Activated CD4-positive, alpha-beta memory T cell treated with anti-CD3 and anti-CD28 coated beads for 36 hours (primary cell): ENCODE measurements at regions of chr16 and their contacts with region 1.

Region 1: GRCh38 chr16:74695450-74696422 is 4.9 kb downstream of the MLKL start:
- DNase-seq: peak; percentile 75
- H3K4me3 Mint-ChIP-seq: peak overlapping the region; percentile 69
- H3K27ac Mint-ChIP-seq: no peak overlapping the region
- H3K4me1 Mint-ChIP-seq: peaks cover 40% of the 10 kb centered on the region
- H3K27me3 Mint-ChIP-seq: no peaks in the 10 kb centered on the region

Region 2: DNA sequence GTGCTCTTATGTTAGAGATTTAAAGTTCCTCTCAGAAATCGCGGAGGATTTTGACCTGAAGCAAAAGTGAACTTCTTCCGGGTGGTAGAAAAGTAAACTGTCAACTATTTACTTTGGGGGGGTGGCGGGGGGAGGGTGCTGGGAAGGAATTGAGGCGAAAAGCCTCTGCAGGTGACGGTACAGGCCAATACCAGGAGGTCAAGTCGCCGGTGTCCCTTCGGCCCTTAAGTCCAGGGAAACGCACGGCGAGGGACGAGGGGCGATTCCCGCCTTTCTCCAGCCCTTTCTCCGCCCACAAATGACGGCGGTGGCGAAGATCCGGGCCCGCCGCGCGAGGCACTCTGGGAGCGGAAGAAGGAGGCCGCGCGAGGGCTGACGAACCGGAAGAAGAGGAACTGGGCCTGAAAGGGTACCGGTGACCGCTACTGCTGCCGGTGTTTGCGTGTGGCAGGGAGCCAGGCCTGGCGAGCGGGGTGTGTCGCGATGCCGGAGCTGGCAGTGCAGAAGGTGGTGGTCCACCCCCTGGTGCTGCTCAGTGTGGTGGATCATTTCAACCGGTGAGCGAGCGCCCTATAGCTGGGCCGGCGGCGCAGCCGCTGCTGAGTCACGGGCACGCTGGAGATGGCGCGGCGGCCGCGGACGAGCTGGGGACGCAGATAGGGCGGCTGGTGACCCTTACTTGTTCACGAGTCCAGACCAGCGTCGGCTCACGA is 399.1 kb before region 1 on chr16 and contains the start of gene PSMD7:
- CTCF ChIA-PET with region 1: no interaction called
- POLR2A ChIA-PET with region 1: no interaction called
- intact Hi-C with region 1: loop called (anchors 1 kb)
- DNase-seq: peak; percentile 94
- H3K4me3 Mint-ChIP-seq: peak within 1 kb of the TSS; percentile 87
- H3K27ac Mint-ChIP-seq: peak within 1 kb of the TSS; percentile 94
- H3K4me1 Mint-ChIP-seq: peaks cover 31% of the 10 kb centered on the region
- H3K27me3 Mint-ChIP-seq: no peaks in the 10 kb centered on the region
- total RNA-seq, gene PSMD7: 119 to 123 TPM

Region 3: DNA sequence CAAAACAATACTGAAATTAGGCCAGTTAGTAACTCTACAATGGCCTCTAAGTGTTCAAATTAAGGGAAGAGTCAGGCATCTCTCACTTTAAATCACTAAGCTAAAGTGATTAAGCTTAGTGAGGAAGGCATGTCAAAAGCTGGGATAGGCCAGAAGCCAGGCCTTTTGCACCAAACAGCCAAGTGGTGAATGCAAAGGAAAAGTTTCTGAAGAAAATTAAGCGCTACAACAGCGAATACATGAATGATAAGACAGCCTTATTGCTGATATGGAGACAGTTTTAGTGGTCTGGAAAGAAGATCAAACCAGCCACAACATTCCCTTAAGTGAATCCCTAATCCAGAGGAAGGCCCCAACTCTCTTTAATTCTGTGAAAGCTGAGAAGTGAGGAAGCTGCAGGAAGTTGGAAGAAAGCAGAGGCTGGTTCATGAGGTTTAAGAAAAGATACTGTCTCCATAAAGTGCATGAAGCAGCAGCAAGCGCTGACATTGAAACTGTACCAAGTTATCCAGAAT is 41.1 kb before region 1 on chr16:
- CTCF ChIA-PET with region 1: no interaction called
- POLR2A ChIA-PET with region 1: no interaction called
- intact Hi-C with region 1: no loop called
- DNase-seq: no peak
- H3K4me3 Mint-ChIP-seq: no peak overlapping the region
- H3K27ac Mint-ChIP-seq: no peak overlapping the region
- H3K4me1 Mint-ChIP-seq: peaks cover 57% of the 10 kb centered on the region
- H3K27me3 Mint-ChIP-seq: no peaks in the 10 kb centered on the region

Region 4: DNA sequence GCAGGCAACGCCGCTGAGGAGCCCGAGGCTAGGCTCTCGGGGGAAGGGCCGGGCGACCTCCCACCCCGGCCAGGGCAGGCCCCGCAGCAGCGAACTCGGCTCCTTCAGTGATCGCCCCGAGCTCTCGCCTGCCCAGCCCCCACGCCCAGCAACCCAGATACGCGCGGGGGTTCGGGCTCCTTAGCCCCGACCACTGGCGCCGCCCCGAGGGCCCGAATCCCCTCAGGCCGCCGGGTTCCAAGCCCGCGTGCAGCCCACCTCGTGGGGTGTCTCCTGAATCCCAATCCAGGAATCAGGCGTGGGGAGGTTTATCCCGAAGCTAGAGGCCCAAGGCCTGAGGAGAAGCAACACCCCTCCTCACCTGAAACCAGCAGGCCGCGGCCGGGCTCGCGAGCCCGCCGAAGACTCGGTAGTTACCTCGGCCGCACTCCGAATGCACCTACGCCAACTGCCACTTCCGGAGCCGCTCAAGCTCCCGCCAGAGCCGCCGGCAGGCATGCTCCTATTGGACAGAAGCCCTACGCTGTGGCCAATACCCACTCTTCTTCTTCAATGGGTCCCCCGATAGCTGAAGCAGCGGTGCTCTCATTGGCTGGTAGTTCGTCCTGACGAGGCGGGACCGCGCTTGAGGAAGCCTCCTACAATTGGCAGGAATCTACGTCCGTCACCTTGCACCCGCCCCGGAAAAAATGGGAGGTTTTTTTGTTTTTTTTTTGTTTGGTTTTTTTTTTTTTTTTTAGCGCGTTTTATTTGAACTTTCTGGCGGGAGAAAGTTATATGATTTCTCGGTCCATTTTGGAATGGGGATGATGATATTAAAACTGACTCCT is 29.1 kb before region 1 on chr16 and contains the start of gene RFWD3:
- CTCF ChIA-PET with region 1: interaction called, 14 read pairs
- POLR2A ChIA-PET with region 1: interaction called, 43 read pairs
- intact Hi-C with region 1: loop called (anchors 1 kb)
- DNase-seq: peak; percentile 98
- H3K4me3 Mint-ChIP-seq: peak within 1 kb of the TSS; percentile 85
- H3K27ac Mint-ChIP-seq: peak within 1 kb of the TSS; percentile 91
- H3K4me1 Mint-ChIP-seq: peaks cover 39% of the 10 kb centered on the region
- H3K27me3 Mint-ChIP-seq: no peaks in the 10 kb centered on the region
- total RNA-seq, gene RFWD3: 95.3 to 109 TPM

Region 5: GRCh38 chr16:74726716-74727115 is 31.0 kb after region 1 on chr16:
- CTCF ChIA-PET with region 1: interaction called, 16 read pairs
- POLR2A ChIA-PET with region 1: no interaction called
- intact Hi-C with region 1: no loop called
- DNase-seq: peak; percentile 65
- H3K4me3 Mint-ChIP-seq: no peak overlapping the region
- H3K27ac Mint-ChIP-seq: no peak overlapping the region
- H3K4me1 Mint-ChIP-seq: peaks cover 6% of the 10 kb centered on the region
- H3K27me3 Mint-ChIP-seq: peaks cover 3% of the 10 kb centered on the region

Region 6: DNA sequence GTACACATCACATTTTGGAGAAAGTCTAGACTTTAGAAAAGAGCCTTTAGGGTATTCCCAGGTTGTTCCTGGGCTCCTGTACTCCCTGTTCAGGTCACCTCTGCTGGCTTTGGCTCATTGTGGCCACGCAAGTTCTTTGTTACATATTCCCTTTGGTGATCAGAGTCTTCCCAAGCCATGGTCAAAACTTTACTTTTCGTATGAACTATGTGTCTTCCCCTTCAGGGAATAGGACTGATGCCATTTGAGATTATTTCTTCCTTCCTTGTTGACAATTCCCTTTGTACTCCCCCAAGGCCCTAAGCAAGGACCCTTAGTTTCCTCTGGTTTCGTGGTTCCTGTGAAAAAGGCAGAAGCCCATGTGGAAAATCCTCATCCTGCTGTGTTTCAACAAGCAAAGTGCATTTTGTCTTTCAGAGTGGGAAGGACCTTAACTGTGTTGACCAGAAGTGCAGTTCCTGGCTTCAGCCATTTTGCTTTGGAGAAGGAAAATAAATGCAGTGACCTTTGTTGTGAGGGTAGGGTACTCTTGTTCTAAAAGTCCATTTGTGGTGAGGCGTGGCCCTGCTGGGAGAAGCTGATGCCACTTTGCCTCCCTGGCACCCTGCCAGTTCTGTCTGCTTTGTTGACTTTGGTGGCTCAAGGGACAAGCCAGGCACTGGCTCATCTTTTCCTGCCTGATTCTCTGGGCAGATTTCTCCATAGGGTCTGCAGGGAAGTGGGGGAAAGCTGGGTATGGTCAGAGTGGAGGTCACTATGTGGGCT is 358.2 kb after region 1 on chr16:
- CTCF ChIA-PET with region 1: no interaction called
- POLR2A ChIA-PET with region 1: no interaction called
- intact Hi-C with region 1: no loop called
- DNase-seq: no peak
- H3K4me3 Mint-ChIP-seq: no peak overlapping the region
- H3K27ac Mint-ChIP-seq: no peak overlapping the region
- H3K4me1 Mint-ChIP-seq: peaks cover 9% of the 10 kb centered on the region
- H3K27me3 Mint-ChIP-seq: no peaks in the 10 kb centered on the region

Region 7: DNA sequence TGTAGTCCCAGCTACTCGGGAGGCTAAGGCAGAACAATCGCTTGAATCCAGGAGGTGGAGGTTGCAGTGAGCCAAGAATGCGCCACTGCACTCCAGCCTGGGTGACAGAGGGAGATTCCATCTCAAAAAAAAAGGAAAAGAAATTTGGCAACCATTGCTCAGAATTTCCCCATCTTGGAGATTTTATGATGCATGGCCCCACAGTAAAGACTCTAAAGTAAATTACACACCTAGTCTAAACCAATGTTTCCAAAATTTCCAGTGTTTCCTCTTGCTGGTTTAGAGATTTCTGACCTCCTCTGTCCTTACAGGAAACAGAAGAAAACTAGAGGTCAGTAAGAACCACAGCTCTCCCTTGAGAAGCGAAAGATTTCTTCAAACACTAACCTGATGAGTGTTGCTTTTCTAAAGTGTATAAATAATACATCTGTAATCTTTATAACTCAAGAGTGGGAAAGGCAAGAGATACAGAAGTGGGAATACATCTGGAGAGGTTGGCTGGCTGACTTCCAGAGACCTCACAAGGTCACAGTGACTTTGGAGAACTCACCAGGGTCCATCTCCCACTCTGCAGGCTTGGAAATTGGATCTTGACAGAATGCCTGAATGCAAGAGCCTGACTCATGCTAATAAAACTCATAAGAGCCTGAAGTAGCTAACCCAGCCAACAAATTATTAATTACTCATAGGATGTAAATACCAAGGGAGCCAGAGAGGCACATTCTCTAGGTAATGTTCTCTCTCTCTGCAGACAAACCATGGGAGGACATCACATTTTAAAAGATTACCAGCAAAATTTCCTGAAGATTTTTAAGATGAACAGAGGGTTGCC is 918.5 kb after region 1 on chr16:
- CTCF ChIA-PET with region 1: no interaction called
- POLR2A ChIA-PET with region 1: no interaction called
- intact Hi-C with region 1: loop called (anchors 5 kb)
- DNase-seq: no peak
- H3K4me3 Mint-ChIP-seq: no peak overlapping the region
- H3K27ac Mint-ChIP-seq: no peak overlapping the region
- H3K4me1 Mint-ChIP-seq: peaks cover 33% of the 10 kb centered on the region
- H3K27me3 Mint-ChIP-seq: no peaks in the 10 kb centered on the region